MCF 10A (cell line): ENCODE measurements at regions of chr10 and their contacts with region 1.

Region 1: DNA sequence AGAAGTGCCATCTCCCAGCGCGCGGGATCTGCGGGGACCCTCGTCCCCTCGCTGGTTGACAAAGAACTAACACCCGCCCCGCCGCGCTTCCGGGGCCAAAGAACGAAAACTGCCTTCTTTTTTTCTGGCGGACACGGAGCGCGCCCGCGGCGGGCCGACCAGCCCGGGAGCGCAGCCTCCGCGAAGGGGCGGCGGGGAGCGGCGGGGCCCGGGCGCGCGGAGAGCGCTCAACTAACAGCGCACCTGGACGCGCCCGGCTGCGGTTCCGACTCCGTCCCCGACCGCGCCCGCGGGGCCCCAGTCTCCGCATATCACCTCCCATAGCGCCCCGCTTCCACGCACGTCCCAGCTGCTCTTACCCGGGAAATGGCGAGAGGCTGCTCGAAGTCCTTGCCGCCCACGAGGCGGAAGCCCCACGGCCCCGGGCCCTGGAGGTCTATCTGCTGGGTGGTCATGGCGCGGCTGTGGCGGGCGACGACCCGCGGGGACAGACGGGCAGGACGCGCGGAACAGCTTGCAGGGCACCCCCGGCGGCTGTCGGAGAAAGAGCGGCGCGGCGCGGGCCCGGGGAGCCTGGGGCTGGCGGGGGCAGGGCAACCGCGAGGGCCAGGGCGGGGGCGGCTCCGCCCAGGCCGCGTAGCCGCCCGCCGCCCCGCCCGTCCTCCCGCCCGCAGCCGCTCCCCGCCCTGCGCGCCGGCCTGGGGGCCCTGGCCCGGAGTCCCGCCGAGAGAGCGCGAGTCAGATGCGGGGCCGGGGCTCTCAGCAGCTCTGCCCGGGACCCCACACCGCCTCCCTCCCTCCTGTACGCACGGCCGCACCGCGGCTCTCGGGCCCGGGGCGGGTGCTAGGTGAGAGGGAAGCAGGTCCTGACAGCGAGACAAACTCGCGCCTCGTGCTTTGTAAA is at the start of gene PDLIM1:
- DNase-seq: peak; percentile 56
- H3K4me3 Mint-ChIP-seq: peak within 1 kb of the TSS; percentile 87
- H3K27ac Mint-ChIP-seq: peak within 1 kb of the TSS; percentile 46
- H3K4me1 Mint-ChIP-seq: peaks cover 18% of the 10 kb centered on the region
- H3K27me3 Mint-ChIP-seq: no peaks in the 10 kb centered on the region
- CTCF ChIP-seq: peak; percentile 21
- total RNA-seq, gene PDLIM1: 74.6 and 98.1 TPM in 2 replicates

Region 2: DNA sequence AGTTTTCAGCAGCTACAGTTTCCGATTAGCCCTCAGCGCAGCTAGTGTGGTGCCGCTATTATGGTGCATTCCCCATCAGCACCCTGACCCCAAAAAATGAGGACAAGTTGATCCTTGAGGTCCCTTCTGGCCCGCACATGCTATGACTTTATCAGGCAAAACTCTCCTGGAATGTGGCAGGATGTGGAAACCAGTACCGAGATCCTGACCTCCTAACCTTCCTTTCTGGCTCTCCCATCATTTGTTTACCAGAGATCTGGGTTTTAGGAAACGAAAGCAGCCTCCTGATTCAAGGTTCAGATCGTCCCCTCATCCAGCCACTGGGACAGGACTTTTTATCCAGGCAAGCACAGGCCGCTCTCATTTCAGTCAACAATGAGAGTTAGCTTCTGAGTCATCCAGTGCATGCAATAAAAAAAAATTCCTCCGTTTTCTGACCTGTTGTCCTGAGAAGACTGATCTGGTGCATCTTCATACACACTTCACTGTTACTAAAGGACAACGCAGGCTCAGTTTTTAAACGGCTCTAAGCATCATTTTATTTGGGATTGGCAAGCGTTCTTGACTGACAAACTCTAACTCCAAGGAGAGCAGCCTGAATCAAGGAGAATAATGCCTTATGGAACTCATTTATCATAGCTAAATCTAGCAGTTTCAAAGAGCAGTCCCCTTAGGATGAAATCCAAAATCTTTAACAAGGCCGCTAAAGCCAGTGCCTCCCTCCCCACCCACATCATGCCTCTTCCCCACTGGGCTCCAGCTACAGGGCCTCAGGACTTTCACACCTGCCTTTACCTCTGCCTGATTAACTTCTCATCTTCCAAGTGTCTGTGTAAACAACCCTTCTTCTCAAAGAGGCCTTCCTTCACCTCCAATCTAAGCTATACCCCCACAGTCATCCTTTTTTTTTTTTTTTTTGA is 17.1 kb before region 1 on chr10:
- CTCF ChIA-PET with region 1: interaction called, 31 read pairs
- POLR2A ChIA-PET with region 1: interaction called, 49 read pairs
- intact Hi-C with region 1: no loop called
- DNase-seq: peak; percentile 82
- H3K4me3 Mint-ChIP-seq: peak overlapping the region; percentile 61
- H3K27ac Mint-ChIP-seq: peak overlapping the region; percentile 97
- H3K4me1 Mint-ChIP-seq: peaks cover 40% of the 10 kb centered on the region
- H3K27me3 Mint-ChIP-seq: no peaks in the 10 kb centered on the region
- CTCF ChIP-seq: no peak

Region 3: DNA sequence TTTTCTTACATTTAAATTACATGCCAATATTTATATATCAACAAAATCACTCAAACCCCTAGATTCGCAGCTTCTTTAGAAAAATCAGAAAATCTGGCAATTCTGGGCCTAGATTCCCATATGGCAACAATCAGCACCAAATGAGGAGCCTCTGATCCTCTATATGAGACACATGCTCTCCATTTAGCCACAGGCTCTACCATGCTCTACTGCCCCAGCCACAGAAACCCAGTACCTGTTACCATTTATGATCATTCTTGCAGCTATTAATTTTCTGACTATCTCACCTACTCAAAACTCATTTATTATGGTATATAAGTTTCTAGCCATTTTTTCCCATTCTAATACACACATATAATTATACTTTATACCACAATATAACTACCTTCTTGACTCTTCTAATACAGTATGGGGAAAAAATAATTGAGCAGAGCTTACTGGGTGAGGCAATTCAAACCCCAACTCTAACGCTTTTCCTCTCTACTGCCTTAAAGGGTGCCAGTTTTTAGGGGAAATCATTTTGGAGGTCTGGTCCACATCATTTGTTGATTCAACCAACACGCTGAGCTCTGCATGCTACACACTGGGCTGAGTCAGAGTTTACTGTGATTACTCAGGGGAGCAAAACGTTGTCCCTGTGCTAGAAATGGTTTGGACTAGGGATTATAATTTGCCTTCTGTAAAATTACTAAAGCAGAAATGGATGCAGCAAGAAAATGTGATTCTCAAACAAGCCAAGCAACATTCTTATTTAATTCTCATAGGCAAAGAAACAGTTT is 11.5 kb before region 1 on chr10:
- CTCF ChIA-PET with region 1: interaction called, 31 read pairs
- POLR2A ChIA-PET with region 1: interaction called, 49 read pairs
- intact Hi-C with region 1: no loop called
- DNase-seq: peak; percentile 57
- H3K4me3 Mint-ChIP-seq: no peak overlapping the region
- H3K27ac Mint-ChIP-seq: peak overlapping the region; percentile 63
- H3K4me1 Mint-ChIP-seq: peaks cover 41% of the 10 kb centered on the region
- H3K27me3 Mint-ChIP-seq: no peaks in the 10 kb centered on the region
- CTCF ChIP-seq: no peak

Region 4: DNA sequence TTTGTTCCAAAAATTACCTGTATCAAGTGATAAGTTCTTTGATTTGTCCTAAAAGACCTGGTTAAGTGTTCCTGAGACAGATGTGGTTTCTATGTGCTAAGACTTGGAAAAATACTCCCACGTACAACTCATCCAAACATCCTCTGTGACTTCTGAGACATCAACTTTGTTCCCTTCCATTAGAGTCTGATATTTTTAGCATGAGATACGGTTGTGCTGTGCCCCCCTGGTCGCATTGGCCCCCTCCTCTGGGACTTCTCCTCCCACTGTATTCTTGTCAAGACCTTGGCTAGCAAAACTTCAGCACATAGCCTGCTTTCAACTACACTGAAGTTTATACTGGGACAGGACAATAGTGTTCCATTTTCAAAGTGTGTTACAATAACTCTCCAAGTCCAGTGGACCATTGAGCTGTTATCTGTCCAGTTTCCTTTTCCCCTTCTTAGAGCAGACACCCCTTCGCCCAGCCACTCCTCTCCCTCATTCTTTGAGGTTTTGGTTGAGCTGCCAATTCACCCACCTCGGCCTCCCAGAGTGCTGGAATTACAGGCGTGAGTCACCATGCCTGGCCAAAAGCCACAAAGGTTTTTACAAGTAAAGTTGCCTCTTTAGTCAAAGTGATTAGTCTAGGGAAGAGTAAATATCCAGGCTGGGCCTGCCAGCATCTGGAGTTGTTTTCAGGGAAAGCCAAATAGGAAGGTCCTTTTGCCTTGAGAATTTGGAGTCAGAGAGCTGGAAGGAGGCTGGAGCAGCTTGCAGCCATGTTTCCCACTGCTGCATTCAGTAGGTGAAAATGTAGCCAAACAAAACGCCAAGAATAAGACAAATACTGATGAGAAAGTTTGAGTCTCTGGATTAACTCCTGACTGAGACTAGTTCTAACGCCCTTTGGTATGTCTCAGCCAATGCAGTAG is 17.9 kb after region 1 on chr10:
- CTCF ChIA-PET with region 1: no interaction called
- POLR2A ChIA-PET with region 1: interaction called, 7 read pairs
- intact Hi-C with region 1: loop called (anchors 2 kb)
- DNase-seq: peak; percentile 98
- H3K4me3 Mint-ChIP-seq: peak overlapping the region; percentile 4
- H3K27ac Mint-ChIP-seq: peak overlapping the region; percentile 6
- H3K4me1 Mint-ChIP-seq: peaks cover 27% of the 10 kb centered on the region
- H3K27me3 Mint-ChIP-seq: peaks cover 12% of the 10 kb centered on the region
- CTCF ChIP-seq: no peak